Activated CD8-positive, alpha-beta T cell treated with anti-CD3 and anti-CD28 coated beads, Interleukin-2, amount 10 ng/mL, durations not matched to agents 7 days and 5 days (primary cell): ENCODE measurements at regions of chr6 and their contacts with region 1.

Region 1: DNA sequence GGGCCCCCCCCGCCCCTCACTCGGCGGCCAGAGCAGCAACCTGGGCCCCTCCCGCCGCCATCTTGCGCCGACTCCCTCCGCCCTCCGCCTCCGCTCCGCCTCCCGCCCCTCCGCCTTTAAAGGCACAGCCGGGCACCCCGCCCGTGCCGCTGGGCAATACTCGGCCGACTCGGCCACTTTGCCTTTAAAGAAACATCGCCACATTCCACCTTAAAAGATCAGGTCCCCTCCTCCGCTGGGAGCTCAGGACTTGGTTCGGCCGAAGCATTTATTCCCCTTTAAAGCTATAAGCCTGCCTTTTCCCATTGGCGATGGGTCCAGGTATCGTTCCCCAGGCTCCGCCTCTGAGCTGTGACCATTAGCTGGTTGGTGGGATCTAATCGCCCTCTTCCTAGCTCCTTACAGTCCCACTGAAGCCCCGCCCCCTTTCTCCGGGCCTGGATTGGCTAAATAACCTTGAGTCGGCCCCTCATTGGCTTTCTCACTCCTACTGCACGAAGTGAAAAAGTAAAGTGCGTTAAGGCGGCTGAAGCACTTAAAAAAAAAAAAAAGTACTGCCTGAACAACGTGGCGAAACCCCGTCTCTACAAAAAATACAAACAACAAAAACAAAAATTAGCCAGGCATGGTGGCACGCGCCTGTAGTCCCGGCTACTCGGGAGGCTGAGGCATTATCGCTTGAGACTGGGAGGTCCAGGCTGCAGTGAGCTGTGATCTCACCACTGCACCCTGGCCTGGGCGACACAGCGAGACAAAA is at the start of gene ZBTB22:
- DNase-seq: peak; percentile 98
- ATAC-seq: peak; percentile 70
- H3K4me3 Mint-ChIP-seq: peak within 1 kb of the TSS; percentile 97
- H3K27ac Mint-ChIP-seq: peak within 1 kb of the TSS; percentile 96
- H3K4me1 Mint-ChIP-seq: peaks cover 78% of the 10 kb centered on the region
- H3K27me3 Mint-ChIP-seq: no peaks in the 10 kb centered on the region
- total RNA-seq, gene ZBTB22: 10.7 to 11.1 TPM

Region 2: DNA sequence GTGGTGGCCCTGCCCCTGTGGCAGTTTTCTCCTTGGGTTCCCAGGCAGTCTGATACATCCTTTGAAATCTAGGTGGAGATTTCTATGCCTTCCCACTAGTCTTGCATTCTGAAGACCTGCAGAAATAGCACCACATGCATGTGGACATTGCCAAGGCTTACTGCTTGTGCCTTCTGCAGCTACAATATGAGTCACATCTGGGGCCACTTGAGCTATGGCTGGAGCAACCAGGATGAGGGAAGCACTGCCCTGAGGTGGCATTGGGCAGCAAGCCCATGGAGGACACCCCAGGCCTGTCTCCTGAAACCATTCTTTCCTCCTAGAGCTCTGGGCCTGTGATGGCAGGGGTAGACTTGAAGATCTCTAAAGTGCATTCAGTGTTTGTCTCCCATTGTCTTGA is 538.8 kb before region 1 on chr6:
- CTCF ChIA-PET with region 1: no interaction called
- POLR2A ChIA-PET with region 1: no interaction called
- DNase-seq: no peak
- ATAC-seq: no peak
- H3K4me3 Mint-ChIP-seq: no peak overlapping the region
- H3K27ac Mint-ChIP-seq: no peak overlapping the region
- H3K4me1 Mint-ChIP-seq: no peaks in the 10 kb centered on the region
- H3K27me3 Mint-ChIP-seq: peaks cover 38% of the 10 kb centered on the region

Region 3: DNA sequence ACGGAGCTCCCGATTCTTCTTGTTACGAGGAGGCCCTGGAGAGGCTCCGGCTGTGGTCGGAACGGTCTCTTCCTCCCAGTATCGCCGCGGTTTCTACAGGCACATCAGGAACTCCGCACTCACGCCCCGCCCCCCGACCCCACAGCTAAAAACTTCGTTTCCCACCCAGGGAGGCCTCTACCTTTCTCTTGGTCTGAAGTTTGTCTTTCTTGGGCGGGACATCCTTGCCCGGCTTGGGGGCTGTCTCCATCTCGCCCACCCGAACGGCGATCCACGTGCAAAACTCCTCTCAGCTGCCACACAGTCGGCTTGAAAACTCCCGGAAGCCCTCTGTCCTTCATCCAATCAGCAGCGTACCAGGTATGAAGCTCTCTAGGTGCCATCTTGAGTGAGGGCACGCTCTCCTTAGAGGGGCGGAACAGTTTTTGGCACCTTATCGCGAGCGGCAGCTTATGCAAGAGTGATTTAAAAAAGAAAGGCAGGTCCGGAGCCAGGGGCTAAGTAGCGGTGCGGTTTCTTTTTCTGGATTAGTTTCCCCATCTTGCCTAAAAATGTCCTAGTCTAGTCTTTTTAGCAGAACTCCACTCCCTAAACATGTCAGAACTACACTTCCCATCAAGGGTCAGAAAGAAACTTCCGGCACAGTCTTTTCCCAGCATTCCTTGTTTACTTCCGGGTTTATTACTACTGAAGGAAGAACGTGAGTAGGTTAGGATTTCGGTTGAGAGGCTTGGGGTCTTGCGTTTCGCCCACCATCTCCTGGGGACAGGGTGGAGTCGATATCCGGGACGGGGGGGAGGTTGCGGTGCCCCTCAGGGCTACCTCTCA is 28.7 kb before region 1 on chr6 and contains the starts of genes PFDN6 and WDR46:
- CTCF ChIA-PET with region 1: interaction called, 4 read pairs
- POLR2A ChIA-PET with region 1: interaction called, 11 read pairs
- DNase-seq: peak; percentile 93
- ATAC-seq: peak; percentile 97
- H3K4me3 Mint-ChIP-seq: peak within 1 kb of the TSS; percentile 97
- H3K27ac Mint-ChIP-seq: peak within 1 kb of the TSS; percentile 87
- H3K4me1 Mint-ChIP-seq: peaks cover 46% of the 10 kb centered on the region
- H3K27me3 Mint-ChIP-seq: no peaks in the 10 kb centered on the region
- total RNA-seq, gene PFDN6: 72.0 to 78.4 TPM
- total RNA-seq, gene WDR46: 66.7 to 68.9 TPM

Region 4: DNA sequence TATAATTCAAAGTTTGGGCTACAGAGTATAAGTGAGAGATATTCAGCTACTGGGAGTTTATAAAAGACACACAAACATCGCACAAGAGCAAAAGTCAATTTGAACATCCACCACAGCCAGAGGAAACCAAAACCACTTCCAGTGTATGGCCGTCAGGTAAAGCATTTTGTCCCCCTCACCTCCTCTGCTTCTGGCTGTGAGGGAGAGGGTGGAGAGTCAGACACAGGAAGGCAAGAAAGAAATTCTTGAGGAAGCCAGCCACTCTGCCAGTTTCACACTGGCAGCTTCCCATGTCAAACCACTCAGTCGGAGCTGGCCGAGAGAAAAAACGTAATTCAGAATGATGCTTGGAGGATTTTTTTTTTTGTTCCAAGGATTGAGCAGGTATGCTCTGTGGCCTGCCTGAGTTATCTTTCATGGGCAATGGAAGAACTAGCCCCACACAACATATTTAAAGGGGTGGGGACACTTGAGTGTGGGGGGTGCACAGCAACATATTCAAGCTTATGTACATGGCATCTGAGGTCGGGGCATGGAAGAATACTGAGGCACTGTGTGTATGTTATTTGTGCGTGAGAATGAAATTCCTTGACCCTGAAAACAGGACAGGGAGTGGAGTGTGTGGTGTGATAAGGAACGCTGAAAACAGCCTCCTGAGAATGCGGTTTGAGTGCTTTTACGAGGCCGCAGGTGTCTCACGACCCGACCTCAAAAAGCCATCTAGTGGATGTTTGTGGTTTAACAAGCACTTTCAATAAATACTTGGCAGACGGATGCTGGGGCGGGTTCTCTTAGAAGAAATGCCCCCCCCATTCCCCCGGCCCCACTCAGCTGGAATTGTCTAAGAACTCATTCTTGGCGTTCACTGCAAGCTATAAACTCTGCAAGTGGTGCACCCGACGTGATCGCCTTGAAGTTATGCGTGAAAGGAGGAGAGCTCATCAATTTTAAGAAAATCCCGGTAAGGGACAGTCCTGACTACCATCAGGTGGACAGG is 27.2 kb after region 1 on chr6:
- CTCF ChIA-PET with region 1: interaction called, 36 read pairs
- POLR2A ChIA-PET with region 1: interaction called, 36 read pairs
- DNase-seq: peak; percentile 85
- ATAC-seq: peak; percentile 68
- H3K4me3 Mint-ChIP-seq: peak overlapping the region; percentile 69
- H3K27ac Mint-ChIP-seq: peak overlapping the region; percentile 94
- H3K4me1 Mint-ChIP-seq: peaks cover 40% of the 10 kb centered on the region
- H3K27me3 Mint-ChIP-seq: no peaks in the 10 kb centered on the region